Panc1 (cell line): ENCODE measurements at regions of chrX and their contacts with region 1.

Region 1: GRCh38 chrX:56802921-56803849 is 74.1 kb downstream of the NBDY start:
- DNase-seq: peak; percentile 10
- ATAC-seq: 0 out of 2 replicates have a peak, but pooled peaks have one; percentile 77
- H3K4me3 ChIP-seq: peak overlapping the region in 1 of 2 experiments; percentile 12; a peak in 1 of 4 replicates
- H3K27ac ChIP-seq: no peak overlapping the region
- H3K4me1 ChIP-seq: no peaks in the 10 kb centered on the region
- H3K27me3 ChIP-seq: no peaks in the 10 kb centered on the region
- CTCF ChIP-seq: peak; percentile 70

Region 2: DNA sequence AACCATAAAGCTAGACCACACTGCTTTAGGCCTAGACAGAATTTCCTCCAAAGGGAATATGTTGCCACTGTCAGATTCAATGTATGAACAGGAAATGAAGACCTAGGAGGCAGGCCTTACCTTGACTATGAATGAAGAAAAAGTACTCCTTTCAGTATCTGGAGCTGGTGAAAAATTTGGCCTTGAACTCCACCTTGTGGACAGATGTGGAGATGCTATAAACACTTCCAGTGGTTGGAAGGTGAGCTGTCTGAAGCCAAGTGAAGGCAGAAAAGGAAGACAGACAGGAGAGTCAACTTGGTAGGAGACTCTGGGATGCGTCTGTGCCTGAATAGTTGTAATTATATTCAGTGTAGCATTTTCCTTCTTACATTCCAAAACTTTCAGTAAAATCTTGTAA is 175.0 kb after region 1 on chrX:
- CTCF ChIA-PET with region 1: interaction called, 5 read pairs
- POLR2A ChIA-PET with region 1: no interaction called
- in situ Hi-C with region 1: no loop called
- intact Hi-C with region 1: loop called (anchors 1 kb)
- DNase-seq: no peak
- ATAC-seq: peak; percentile 88
- H3K4me3 ChIP-seq: no peak overlapping the region
- H3K27ac ChIP-seq: no peak overlapping the region
- H3K4me1 ChIP-seq: no peaks in the 10 kb centered on the region
- H3K27me3 ChIP-seq: no peaks in the 10 kb centered on the region
- CTCF ChIP-seq: peak; percentile 68